CD14-positive monocyte (primary cell): ENCODE measurements at regions of chr11 and their contacts with region 1.

Region 1: DNA sequence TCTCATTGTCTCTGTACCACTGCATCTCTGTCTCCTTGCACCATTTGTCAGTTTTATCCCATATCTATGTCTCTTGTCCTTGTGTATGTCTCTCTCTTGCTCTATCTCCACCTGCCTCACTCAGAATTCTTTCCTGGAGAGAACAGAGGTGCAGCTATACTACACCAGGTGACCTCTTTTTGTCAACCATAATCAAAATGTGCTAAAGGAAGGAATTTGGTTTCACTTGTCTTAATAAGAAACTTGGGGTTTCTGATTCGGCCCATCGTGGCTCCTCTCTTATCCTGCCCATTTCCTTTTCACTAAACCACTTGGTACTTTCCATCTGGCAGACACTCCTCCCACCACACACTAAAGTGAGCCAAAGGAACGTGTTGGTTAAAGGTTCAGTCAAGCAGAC is 2.0 kb upstream of the C11orf42 start:
- DNase-seq: peak in 1 of 3 donors; percentile 66
- H3K4me3 ChIP-seq: peak overlapping the region in 1 of 3 experiments; percentile 10
- H3K4me3 Mint-ChIP-seq: no peak overlapping the region
- H3K27ac ChIP-seq: peak overlapping the region; percentile 48 to 100
- H3K27ac Mint-ChIP-seq: peak overlapping the region; percentile 100
- H3K4me1 ChIP-seq: peaks cover 72 to 89% of the 10 kb centered on the region in 2 donors
- H3K4me1 Mint-ChIP-seq: peaks cover 82% of the 10 kb centered on the region
- H3K27me3 ChIP-seq: no peaks in the 10 kb centered on the region
- H3K27me3 Mint-ChIP-seq: peaks cover 0 to 3% (median 1%) of the 10 kb centered on the region in 3 donors
- CTCF ChIP-seq: no peak

Region 2: DNA sequence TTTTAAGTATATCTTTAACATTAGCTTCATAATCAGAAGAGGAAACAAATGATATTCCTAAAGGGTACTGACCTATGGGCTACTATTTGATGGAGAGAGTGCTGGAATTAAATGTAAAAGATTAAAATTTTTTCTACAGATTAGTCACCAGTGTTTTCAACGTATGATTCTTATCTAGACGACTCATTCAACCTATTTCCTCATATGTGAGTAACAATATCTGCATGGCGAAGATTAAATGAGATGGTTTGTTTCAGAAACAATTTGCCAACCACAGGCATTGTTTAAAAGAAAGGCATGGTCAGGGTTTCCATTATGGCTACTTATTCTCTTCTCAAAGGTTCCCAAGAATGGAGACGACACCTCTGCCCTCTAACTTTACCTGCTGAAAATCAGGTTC is 75.4 kb before region 1 on chr11:
- intact Hi-C with region 1: loop called (anchors 5 to 10 kb)
- DNase-seq: peak; percentile 54 to 77 (median 69)
- H3K4me3 ChIP-seq: no peak overlapping the region
- H3K4me3 Mint-ChIP-seq: no peak overlapping the region
- H3K27ac ChIP-seq: peak overlapping the region in 1 of 2 donors; percentile 82
- H3K27ac Mint-ChIP-seq: peak overlapping the region; percentile 88 to 95 (median 95)
- H3K4me1 ChIP-seq: peaks cover 58 to 72% of the 10 kb centered on the region in 2 donors
- H3K4me1 Mint-ChIP-seq: peaks cover 59% of the 10 kb centered on the region
- H3K27me3 ChIP-seq: no peaks in the 10 kb centered on the region
- H3K27me3 Mint-ChIP-seq: no peaks in the 10 kb centered on the region
- CTCF ChIP-seq: no peak

Region 3: GRCh38 chr11:6234387-6235107 is 31.2 kb after region 1 on chr11 and contains the start of gene FHIP1B:
- intact Hi-C with region 1: loop called (anchors 2 kb)
- DNase-seq: peak; percentile 99 to 100 (median 100)
- H3K4me3 ChIP-seq: peak within 1 kb of the TSS; percentile 81 to 94 (median 87)
- H3K4me3 Mint-ChIP-seq: peak within 1 kb of the TSS; percentile 97 to 100
- H3K27ac ChIP-seq: peak within 1 kb of the TSS; percentile 84 to 97
- H3K27ac Mint-ChIP-seq: peak within 1 kb of the TSS; percentile 98 to 100 (median 98)
- H3K4me1 ChIP-seq: peaks cover 49 to 72% of the 10 kb centered on the region in 2 donors
- H3K4me1 Mint-ChIP-seq: peaks cover 48% of the 10 kb centered on the region
- H3K27me3 ChIP-seq: no peaks in the 10 kb centered on the region
- H3K27me3 Mint-ChIP-seq: peaks cover 0 to 1% (median 0%) of the 10 kb centered on the region in 3 donors
- CTCF ChIP-seq: no peak
- polyA plus RNA-seq, gene FHIP1B: 14.2 to 64.1 (median 18.9) TPM

Region 4: DNA sequence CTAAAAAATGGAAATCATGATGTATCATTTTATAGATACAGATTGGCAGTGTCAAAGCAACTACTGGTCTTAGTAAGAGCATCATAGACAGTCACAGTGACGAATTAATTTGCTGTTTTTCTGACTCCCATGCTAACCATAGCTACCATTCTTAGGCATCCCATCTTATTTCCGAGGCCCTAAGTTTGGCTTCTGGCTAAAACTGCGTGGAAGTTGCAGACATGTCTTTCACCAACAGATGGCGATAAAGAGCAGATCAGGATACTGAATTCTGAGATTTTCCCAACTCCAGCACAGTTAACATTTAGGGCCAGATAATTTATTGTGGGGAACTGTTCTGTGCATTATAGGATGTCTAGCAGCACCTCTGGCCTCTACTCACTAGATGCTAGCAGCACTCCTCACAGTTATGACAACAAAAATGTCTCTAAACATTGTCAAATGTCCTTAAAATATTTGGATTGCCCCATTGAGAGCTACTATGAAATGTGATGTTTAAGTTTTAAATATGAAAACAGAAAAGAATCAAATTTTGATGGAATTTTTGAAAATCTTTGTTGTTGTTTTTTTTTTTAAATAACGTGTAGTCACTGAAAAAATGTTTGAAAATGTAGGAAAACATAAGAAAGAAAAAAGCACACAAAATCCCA is 552.1 kb after region 1 on chr11:
- intact Hi-C with region 1: no loop called
- DNase-seq: peak in 2 of 3 donors; percentile 37 to 45
- H3K4me3 ChIP-seq: no peak overlapping the region
- H3K4me3 Mint-ChIP-seq: no peak overlapping the region
- H3K27ac ChIP-seq: no peak overlapping the region
- H3K27ac Mint-ChIP-seq: no peak overlapping the region
- H3K4me1 ChIP-seq: no peaks in the 10 kb centered on the region
- H3K4me1 Mint-ChIP-seq: no peaks in the 10 kb centered on the region
- H3K27me3 ChIP-seq: no peaks in the 10 kb centered on the region
- H3K27me3 Mint-ChIP-seq: peaks cover 0 to 3% (median 0%) of the 10 kb centered on the region in 3 donors
- CTCF ChIP-seq: peak; percentile 90